Mammary epithelial cell (primary cell): ENCODE measurements at regions of chr1 and their contacts with region 1.

Region 1: GRCh38 chr1:88678405-88678804 is 5.7 kb upstream of the PKN2 start:
- DNase-seq: no peak
- H3K4me3 ChIP-seq: no peak overlapping the region
- H3K27ac ChIP-seq: no peak overlapping the region
- H3K4me1 ChIP-seq: no peaks in the 10 kb centered on the region
- H3K27me3 ChIP-seq: no peaks in the 10 kb centered on the region
- CTCF ChIP-seq: no peak

Region 2: DNA sequence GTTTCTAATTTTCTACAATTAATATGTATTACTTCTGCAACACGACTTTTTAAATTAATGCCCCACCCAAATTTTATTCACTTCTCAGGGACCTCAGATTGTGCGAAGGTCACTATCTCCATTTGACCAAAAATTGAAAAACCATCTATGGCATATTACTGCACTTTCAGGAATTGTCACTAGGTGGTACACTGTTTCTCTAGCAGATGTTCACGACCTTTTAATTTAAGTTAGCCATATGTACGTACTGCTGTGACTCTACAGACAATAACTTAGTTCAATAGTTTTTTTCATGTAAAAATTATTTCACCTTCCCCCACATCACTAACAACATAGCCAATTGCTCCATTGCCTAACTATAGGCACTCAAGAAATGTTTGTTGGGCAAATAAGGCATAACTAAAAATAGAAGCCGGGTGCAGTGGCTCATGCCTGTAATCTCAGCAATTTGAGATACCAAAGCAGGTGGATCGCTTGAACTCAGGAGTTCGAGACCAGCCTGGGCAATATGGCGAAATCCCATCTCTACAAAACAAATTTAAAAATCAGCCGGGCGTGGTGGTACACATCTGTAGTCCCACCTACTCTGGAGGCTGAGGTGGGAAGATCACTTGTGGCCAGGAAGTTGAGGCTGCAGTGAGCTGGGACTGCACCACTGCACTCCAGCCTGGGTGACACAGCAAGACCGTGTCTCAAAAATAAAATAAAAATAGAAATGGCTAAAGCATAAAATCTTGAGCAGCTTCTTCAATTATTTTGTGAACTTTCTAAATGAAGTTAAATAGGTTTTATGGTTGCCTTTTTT is 70.1 kb before region 1 on chr1:
- CTCF ChIA-PET with region 1: no interaction called
- dilution Hi-C with region 1: loop called (anchors 5 kb)
- in situ Hi-C with region 1: no loop called
- intact Hi-C with region 1: no loop called
- DNase-seq: peak; percentile 28
- H3K4me3 ChIP-seq: no peak overlapping the region
- H3K27ac ChIP-seq: no peak overlapping the region
- H3K4me1 ChIP-seq: peaks cover 9% of the 10 kb centered on the region
- H3K27me3 ChIP-seq: no peaks in the 10 kb centered on the region
- CTCF ChIP-seq: peak; percentile 74 to 76

Region 3: DNA sequence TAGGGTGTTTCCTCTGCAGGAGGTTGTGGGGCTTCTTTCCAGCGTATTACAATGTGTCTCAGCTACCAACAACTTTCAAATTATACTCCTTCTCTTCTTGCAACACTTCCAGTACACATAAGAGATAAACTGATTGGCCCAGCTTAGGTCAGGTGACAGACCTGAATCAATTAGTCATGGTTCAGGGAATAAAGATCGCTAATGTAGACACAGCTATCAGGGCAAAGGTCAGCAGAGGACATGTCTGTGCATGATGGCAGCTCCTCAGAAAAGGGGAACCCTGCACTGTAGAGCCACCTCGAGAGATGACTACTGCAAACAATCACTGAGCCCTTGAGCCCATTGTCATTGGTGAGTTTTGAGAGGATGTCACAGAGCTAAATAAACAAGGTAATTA is 31.2 kb before region 1 on chr1:
- CTCF ChIA-PET with region 1: no interaction called
- dilution Hi-C with region 1: no loop called
- in situ Hi-C with region 1: no loop called
- intact Hi-C with region 1: no loop called
- DNase-seq: peak; percentile 65
- H3K4me3 ChIP-seq: no peak overlapping the region
- H3K27ac ChIP-seq: no peak overlapping the region
- H3K4me1 ChIP-seq: peaks cover 23% of the 10 kb centered on the region
- H3K27me3 ChIP-seq: no peaks in the 10 kb centered on the region
- CTCF ChIP-seq: no peak